ENCODE measurements at regions of chr19 and their contacts with region 1.

Region 1: GRCh38 chr19:45994989-45995714 is at the start of gene CCDC61:
- DNase-seq: peak; percentile 90 to 98
- ATAC-seq: peak; percentile 98 to 100 (median 99)
- H3K4me3 ChIP-seq: peak within 1 kb of the TSS; percentile 61 to 94 (median 79)
- H3K27ac ChIP-seq: peak within 1 kb of the TSS in 9 of 10 donors; percentile 3 to 91 (median 81)
- H3K4me1 ChIP-seq: peaks cover 3 to 24% (median 17%) of the 10 kb centered on the region in 9 donors
- H3K27me3 ChIP-seq: peaks cover 0 to 15% (median 0%) of the 10 kb centered on the region in 7 donors
- CTCF ChIP-seq: no peak
- total RNA-seq, gene CCDC61: 6.6 to 10.3 (median 8.3) TPM

Region 2: GRCh38 chr19:45862564-45863334 is 132.4 kb before region 1 on chr19 and contains the start of gene SYMPK:
- intact Hi-C with region 1: loop called in 1 of 10 experiments (anchors 5 kb)
- DNase-seq: peak; percentile 99
- ATAC-seq: peak; percentile 99 to 100 (median 99)
- H3K4me3 ChIP-seq: peak within 1 kb of the TSS; percentile 84 to 100 (median 88)
- H3K27ac ChIP-seq: peak within 1 kb of the TSS; percentile 76 to 96 (median 90)
- H3K4me1 ChIP-seq: peaks cover 0 to 33% (median 25%) of the 10 kb centered on the region in 9 donors
- H3K27me3 ChIP-seq: peaks cover 0 to 31% (median 23%) of the 10 kb centered on the region in 7 donors
- CTCF ChIP-seq: no peak
- total RNA-seq, gene SYMPK: 22.4 to 45.0 (median 33.0) TPM

Measured in heart right ventricle (tissue), 16 donors.